Activated CD4-positive, alpha-beta T cell treated with anti-CD3 and anti-CD28 coated beads, Interleukin-2, amount 10 ng/mL, durations not matched to agents 24 days and 14 days (primary cell): ENCODE measurements at regions of chr1 and their contacts with region 1.

Region 1: DNA sequence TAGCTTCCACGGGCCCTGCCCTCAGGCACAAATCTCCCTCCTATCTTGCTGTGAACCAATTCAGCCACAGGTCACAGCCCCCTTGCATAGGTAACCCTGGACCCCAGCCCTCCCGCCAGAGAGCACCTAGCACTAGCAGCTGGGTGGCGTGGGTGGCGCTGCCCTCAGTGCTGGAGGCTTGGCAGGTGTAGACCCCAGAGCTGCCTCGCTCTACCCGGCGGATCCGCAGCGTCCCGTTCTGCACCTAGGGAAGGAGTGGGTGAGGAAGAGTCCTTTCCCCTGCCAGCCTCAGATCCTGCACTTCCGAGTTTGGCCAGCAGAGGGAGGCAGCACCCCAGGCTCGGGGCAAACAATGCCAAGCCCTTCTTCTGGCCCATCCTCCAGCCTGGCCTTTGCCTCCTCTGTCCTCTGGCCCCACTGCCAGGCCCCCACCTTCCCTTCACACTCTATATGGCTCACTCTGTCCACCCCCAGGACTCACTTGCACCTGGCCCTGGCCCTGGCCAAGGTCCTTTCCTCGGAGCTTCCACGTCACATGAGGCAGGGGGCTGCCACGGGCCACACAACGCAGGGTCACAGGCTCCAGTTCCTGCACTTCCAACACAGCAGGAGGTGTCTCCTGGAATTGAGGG is 9.0 kb downstream of the IGSF9 start:
- DNase-seq: peak; percentile 96
- H3K4me3 Mint-ChIP-seq: no peak overlapping the region
- H3K27ac Mint-ChIP-seq: no peak overlapping the region
- H3K4me1 Mint-ChIP-seq: peaks cover 17% of the 10 kb centered on the region
- H3K27me3 Mint-ChIP-seq: peaks cover 25% of the 10 kb centered on the region

Region 2: DNA sequence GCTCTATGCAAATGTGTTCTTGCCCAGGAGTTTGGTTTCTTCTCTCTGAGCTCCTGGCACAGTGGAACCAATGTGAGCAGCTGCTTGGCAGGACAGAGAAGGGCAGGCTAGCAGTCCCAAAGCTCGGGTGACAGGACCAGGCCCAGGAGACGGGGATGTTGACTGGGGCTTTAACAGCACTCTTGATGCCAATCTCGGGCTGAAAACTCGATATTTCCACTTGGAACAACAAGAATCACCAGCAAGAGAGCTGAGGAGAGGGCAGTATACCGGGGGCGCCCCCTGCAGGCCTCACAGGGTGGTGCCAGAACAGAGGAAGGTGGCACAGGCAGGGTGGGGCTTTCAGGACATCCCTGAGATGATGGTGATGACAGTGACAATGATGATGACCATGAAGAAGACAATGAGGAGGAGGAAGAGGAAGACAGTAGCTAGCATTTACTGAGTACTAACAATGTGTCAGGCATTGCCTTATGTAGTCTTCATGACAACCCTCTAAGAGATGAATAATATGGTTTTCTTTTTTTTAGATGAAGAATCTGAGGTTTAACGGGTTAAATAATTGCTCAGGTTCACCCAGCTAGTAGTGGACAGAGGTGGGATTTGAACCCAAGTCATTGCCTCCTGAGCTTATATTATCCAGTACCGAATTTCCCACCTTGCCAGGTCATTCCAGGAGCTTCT is 142.3 kb after region 1 on chr1:
- intact Hi-C with region 1: loop called (anchors 2 kb)
- DNase-seq: peak; percentile 89
- H3K4me3 Mint-ChIP-seq: no peak overlapping the region
- H3K27ac Mint-ChIP-seq: no peak overlapping the region
- H3K4me1 Mint-ChIP-seq: peaks cover 12% of the 10 kb centered on the region
- H3K27me3 Mint-ChIP-seq: peaks cover 51% of the 10 kb centered on the region